ENCODE measurements at regions of chr16 and their contacts with region 1.

Region 1: DNA sequence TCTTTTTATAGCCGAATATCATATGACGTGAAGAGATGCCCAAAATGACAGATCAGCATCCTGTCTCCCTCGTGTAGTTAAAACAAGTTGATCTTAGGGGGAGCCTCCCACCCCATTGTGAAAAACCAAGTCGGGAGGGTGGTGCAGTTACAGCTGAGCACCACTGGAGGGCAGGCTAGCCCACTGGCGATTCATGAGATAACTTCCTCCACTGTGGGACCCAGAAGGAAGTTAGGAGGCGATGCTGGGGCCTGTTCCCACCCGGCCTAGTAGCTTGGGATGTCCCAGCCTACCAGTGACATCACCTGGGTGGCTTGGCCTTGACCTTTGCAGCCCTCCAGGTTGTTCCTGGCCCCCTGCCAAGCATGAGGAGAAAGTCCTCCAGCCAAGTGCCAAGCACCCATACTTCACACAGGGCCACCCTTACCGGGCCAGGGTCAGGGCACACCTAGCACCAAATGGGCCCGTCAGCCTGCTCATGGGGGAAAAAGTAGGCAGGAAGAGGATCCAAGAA is 8.1 kb upstream of the CPNE2 start:
- DNase-seq: peak; percentile 36
- H3K4me3 ChIP-seq: no peak overlapping the region
- H3K27ac ChIP-seq: no peak overlapping the region
- H3K4me1 ChIP-seq: no peaks in the 10 kb centered on the region
- H3K27me3 ChIP-seq: no peaks in the 10 kb centered on the region
- CTCF ChIP-seq: peak; percentile 97 to 99

Region 2: GRCh38 chr16:56969769-56970168 is 114.5 kb before region 1 on chr16:
- CTCF ChIA-PET with region 1: interaction called, 12 read pairs
- dilution Hi-C with region 1: no loop called
- in situ Hi-C with region 1: no loop called
- intact Hi-C with region 1: loop called (anchors 1 kb)
- DNase-seq: no peak
- H3K4me3 ChIP-seq: no peak overlapping the region
- H3K27ac ChIP-seq: no peak overlapping the region
- H3K4me1 ChIP-seq: peaks cover 3% of the 10 kb centered on the region
- H3K27me3 ChIP-seq: no peaks in the 10 kb centered on the region
- CTCF ChIP-seq: no peak

Region 3: GRCh38 chr16:57167953-57168352 is 83.6 kb after region 1 on chr16:
- CTCF ChIA-PET with region 1: no interaction called
- dilution Hi-C with region 1: no loop called
- in situ Hi-C with region 1: loop called in 1 of 2 experiments (anchors 10 kb)
- intact Hi-C with region 1: loop called (anchors 1 kb)
- DNase-seq: peak; percentile 34
- H3K4me3 ChIP-seq: no peak overlapping the region
- H3K27ac ChIP-seq: no peak overlapping the region
- H3K4me1 ChIP-seq: no peaks in the 10 kb centered on the region
- H3K27me3 ChIP-seq: no peaks in the 10 kb centered on the region
- CTCF ChIP-seq: peak; percentile 34 to 58

Region 4: DNA sequence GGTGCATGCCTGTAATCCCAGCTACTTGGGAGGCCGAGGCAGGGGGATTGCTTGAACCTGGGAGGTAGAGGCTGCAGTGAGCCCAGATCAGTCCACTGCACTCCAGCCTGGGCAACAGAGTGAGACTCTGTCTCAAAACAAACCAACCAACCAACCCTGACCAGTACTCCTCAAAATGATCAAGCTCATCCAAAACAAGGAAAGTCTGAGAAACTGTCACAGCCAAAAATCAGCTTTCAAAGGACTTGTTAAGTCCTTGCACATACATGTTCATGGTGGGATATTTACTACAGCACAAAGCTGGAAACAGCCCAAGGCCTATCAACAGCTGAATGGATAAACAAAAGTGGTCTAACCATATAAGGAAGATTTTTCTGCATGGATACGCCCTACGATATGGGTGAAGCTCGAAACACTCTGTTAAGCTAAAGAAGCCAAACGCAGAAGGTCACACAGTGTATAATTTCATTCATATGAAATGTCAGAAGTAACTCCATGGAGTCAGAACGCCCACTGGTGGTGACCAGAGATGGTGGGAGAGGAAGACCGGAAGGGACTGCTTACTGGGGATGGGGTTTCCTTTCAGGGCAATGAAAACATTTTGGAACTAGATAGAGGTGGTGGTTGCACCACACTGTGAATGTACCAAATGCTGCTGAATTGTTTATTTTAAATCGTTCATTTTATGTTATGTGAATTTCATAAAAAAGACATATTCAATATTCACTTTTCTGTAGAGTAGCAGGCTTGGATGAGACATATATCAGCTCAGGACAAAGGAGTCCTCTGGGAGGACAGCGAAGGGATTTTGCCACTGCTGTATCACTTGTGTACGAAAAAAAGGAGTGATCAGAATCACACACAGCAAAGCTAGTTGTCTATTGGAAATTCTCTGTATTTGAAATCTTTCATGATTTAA is 338.0 kb after region 1 on chr16:
- CTCF ChIA-PET with region 1: no interaction called
- dilution Hi-C with region 1: no loop called
- in situ Hi-C with region 1: no loop called
- intact Hi-C with region 1: loop called (anchors 2 kb)
- DNase-seq: peak; percentile 33
- H3K4me3 ChIP-seq: no peak overlapping the region
- H3K27ac ChIP-seq: no peak overlapping the region
- H3K4me1 ChIP-seq: peaks cover 12% of the 10 kb centered on the region
- H3K27me3 ChIP-seq: no peaks in the 10 kb centered on the region
- CTCF ChIP-seq: peak; percentile 69

Measured in mammary epithelial cell (primary cell).